ENCODE measurements at regions of chr18 and their contacts with region 1.

Region 1: DNA sequence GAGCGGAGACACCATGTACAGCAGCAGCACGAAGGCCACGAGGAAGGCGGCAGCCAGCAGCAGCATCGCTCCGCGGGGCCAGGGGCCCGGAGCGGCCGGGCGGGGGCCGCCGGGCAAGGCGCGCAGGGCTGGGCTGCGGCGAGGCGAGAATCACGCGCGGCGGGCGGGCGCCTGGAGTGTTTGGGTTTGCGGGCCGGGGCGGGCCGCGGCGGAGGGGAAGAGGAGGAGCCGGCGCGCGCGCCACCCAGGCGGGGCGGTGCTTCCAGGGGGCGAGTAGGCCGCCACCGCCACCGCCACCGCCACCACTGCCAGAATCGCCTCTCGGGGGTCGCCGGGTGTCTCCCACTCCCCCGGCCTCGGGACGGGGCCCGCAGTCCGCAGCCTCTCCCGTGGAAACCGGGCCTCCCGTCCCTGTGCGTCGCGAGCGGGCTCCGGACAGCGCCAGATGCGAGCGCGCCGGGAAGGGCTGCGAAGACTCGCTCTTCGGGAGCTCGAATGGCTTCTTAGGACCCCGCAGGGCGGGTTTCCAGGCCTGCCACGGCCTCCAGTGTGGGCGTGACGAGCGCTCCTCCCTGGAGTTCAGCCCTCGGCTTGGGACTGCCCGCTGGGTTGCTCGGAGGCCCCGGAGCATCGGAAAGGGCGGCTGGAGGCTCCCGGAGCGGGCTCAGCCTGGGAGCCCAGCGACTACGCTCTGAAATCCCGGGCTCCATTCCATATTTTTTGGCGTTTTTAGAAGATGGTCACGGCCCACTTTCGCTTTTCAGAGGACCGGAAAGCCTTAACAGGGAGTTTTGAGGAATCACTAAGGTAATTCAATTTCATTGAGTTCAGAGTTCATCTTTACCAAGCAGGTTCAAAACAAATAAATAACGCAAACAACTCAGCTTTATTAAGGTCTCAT is at the start of gene KDSR:
- DNase-seq: peak; percentile 94
- ATAC-seq: peak; percentile 88
- H3K4me3 ChIP-seq: peak within 1 kb of the TSS; percentile 84 to 85
- H3K27ac ChIP-seq: peak within 1 kb of the TSS; percentile 87
- H3K4me1 ChIP-seq: peaks cover 7 to 14% of the 10 kb centered on the region in 2 experiments; a peak in 3 of 4 replicates
- H3K27me3 ChIP-seq: no peaks in the 10 kb centered on the region
- CTCF ChIP-seq: no peak
- POLR2A ChIP-seq: peak; percentile 89
- RAD21 ChIP-seq: no peak
- total RNA-seq, gene KDSR: 68.6 TPM

Region 2: DNA sequence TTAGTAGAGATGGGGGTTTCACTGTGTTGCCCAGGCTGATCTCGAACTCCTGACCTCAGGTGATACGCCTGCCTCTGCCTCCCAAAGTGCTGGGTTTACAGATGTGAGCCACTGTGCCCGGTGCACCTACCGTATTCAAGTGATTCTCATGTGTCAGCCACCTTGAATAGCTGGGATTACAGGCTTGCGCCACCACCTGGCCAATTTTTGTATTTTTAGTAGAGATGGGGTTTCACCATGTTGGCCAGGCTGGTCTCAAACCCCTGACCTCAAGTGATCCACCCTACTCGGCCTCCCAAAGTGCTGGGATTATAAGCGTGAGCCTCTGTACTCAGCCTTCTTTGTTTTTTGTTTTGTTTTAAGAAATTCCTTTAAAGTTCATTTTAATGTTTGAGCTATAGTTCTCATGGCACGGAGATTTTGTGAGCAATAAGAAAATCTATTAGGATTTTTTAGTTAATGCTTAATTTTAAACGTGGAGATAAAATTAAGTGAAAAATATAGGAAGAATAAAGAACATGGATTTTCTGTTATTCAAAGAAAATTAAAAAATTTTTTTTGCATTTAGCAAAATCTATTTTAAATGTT is 409.3 kb before region 1 on chr18:
- CTCF ChIA-PET with region 1: no interaction called
- POLR2A ChIA-PET with region 1: no interaction called
- RAD21 ChIA-PET with region 1: no interaction called
- intact Hi-C with region 1: no loop called
- DNase-seq: peak; percentile 40
- ATAC-seq: peak; percentile 98
- H3K4me3 ChIP-seq: no peak overlapping the region
- H3K27ac ChIP-seq: no peak overlapping the region
- H3K4me1 ChIP-seq: no peaks in the 10 kb centered on the region
- H3K27me3 ChIP-seq: no peaks in the 10 kb centered on the region
- CTCF ChIP-seq: peak; percentile 49 to 64 (median 61); a peak in 4 of 6 replicates
- POLR2A ChIP-seq: no peak
- RAD21 ChIP-seq: peak; percentile 77

Region 3: GRCh38 chr18:63422087-63422809 is 54.9 kb after region 1 on chr18 and contains the start of gene VPS4B:
- CTCF ChIA-PET with region 1: no interaction called
- POLR2A ChIA-PET with region 1: no interaction called
- RAD21 ChIA-PET with region 1: no interaction called
- intact Hi-C with region 1: loop called (anchors 1 kb)
- DNase-seq: peak; percentile 98
- ATAC-seq: peak; percentile 96
- H3K4me3 ChIP-seq: peak within 1 kb of the TSS; percentile 83 to 87
- H3K27ac ChIP-seq: peak within 1 kb of the TSS; percentile 82
- H3K4me1 ChIP-seq: peaks cover 5 to 29% of the 10 kb centered on the region in 2 experiments; a peak in 2 of 4 replicates
- H3K27me3 ChIP-seq: no peaks in the 10 kb centered on the region
- CTCF ChIP-seq: no peak
- POLR2A ChIP-seq: peak; percentile 82
- RAD21 ChIP-seq: no peak
- total RNA-seq, gene VPS4B: 68.3 TPM

Measured in HCT116 (cell line).